ENCODE measurements at regions of chr9 and their contacts with region 1.

Region 1: DNA sequence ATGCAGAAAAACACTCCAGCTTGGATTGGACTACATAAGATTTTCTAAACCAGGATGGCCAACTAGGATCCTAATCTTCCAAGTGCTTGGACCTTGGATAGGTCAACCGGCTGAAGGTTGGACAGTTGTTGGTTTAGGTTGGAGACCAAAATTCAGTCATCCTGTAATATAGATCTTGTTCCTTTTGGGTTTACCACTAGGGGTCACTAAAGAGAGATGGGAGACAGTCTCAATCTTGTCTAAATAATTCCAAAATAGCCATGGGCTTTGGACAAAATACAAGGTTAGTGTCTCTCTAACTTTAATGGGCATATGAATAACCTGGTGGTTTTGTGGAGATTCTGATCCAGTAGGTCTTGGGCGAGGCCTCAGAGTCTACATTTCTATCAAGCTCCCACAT is 148.7 kb upstream of the ERCC6L2 start:
- DNase-seq: peak in 1 of 2 donors; percentile 50
- ATAC-seq: no peak
- H3K4me3 ChIP-seq: no peak overlapping the region
- H3K4me3 Mint-ChIP-seq: no peak overlapping the region
- H3K27ac ChIP-seq: no peak overlapping the region
- H3K27ac Mint-ChIP-seq: peak overlapping the region in 1 of 2 donors; percentile 59
- H3K4me1 ChIP-seq: peaks cover 22% of the 10 kb centered on the region
- H3K4me1 Mint-ChIP-seq: peaks cover 47 to 53% of the 10 kb centered on the region in 2 donors
- H3K27me3 ChIP-seq: no peaks in the 10 kb centered on the region
- H3K27me3 Mint-ChIP-seq: peaks cover under 1 to 2% of the 10 kb centered on the region in 2 donors
- CTCF ChIP-seq: peak; percentile 68

Region 2: GRCh38 chr9:95462249-95463147 is 264.3 kb before region 1 on chr9:
- intact Hi-C with region 1: loop called (anchors 1 kb)
- DNase-seq: peak; percentile 55 to 92
- ATAC-seq: peak; percentile 85 to 98 (median 91)
- H3K4me3 ChIP-seq: peak overlapping the region; percentile 15
- H3K4me3 Mint-ChIP-seq: peak overlapping the region; percentile 96
- H3K27ac ChIP-seq: peak overlapping the region; percentile 2
- H3K27ac Mint-ChIP-seq: peak overlapping the region; percentile 84 to 87
- H3K4me1 ChIP-seq: peaks cover 26% of the 10 kb centered on the region
- H3K4me1 Mint-ChIP-seq: peaks cover 52 to 68% of the 10 kb centered on the region in 2 donors
- H3K27me3 ChIP-seq: no peaks in the 10 kb centered on the region
- H3K27me3 Mint-ChIP-seq: no peaks in the 10 kb centered on the region
- CTCF ChIP-seq: no peak

Region 3: GRCh38 chr9:95696701-95697100 is 30.1 kb before region 1 on chr9:
- intact Hi-C with region 1: no loop called
- DNase-seq: no peak
- ATAC-seq: no peak
- H3K4me3 ChIP-seq: no peak overlapping the region
- H3K4me3 Mint-ChIP-seq: no peak overlapping the region
- H3K27ac ChIP-seq: no peak overlapping the region
- H3K27ac Mint-ChIP-seq: no peak overlapping the region
- H3K4me1 ChIP-seq: no peaks in the 10 kb centered on the region
- H3K4me1 Mint-ChIP-seq: no peaks in the 10 kb centered on the region
- H3K27me3 ChIP-seq: peaks cover 4% of the 10 kb centered on the region
- H3K27me3 Mint-ChIP-seq: peaks cover 10 to 26% of the 10 kb centered on the region in 2 donors
- CTCF ChIP-seq: no peak

Region 4: DNA sequence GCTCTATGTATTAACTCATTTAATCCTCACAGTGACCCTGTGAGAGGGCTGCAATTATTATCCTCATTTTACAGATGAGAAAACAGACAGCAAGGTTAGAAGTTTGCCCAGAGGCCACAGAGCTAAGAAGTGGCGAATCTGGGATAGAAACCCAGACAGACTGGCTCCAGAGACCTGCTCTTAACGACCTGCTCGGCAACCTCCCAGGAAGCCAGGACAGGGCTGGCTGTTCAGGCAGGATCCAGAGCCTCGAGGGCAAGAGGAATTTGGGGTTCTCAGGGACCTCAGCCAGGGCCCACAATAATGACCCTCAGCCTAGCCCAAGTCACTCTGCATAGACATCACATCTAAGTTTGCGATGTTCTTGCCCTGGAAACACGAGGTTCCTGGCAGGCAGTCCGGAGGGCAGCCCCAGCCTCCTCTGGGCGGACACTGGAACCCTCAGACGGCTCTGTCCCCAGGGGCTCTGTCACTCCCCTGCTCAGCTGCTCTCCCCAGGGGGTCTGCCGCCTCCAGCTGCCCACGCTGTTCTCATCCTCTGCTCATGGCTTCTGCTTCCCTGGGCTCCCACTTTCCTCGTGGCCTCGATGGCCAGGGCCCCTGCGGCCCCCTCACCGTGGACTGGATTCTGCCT is 10.2 kb after region 1 on chr9:
- intact Hi-C with region 1: no loop called
- DNase-seq: no peak
- ATAC-seq: no peak
- H3K4me3 ChIP-seq: no peak overlapping the region
- H3K4me3 Mint-ChIP-seq: no peak overlapping the region
- H3K27ac ChIP-seq: no peak overlapping the region
- H3K27ac Mint-ChIP-seq: no peak overlapping the region
- H3K4me1 ChIP-seq: peaks cover 6% of the 10 kb centered on the region
- H3K4me1 Mint-ChIP-seq: no peaks in the 10 kb centered on the region
- H3K27me3 ChIP-seq: peaks cover 2% of the 10 kb centered on the region
- H3K27me3 Mint-ChIP-seq: peaks cover 9 to 14% of the 10 kb centered on the region in 2 donors
- CTCF ChIP-seq: no peak

Region 5: GRCh38 chr9:95875305-95876137 is 148.8 kb after region 1 on chr9 and contains the start of gene ERCC6L2:
- intact Hi-C with region 1: loop called (anchors 2 kb)
- DNase-seq: peak; percentile 92 to 97
- ATAC-seq: peak; percentile 85 to 93 (median 89)
- H3K4me3 ChIP-seq: peak within 1 kb of the TSS; percentile 95
- H3K4me3 Mint-ChIP-seq: no peak within 1 kb of the TSS
- H3K27ac ChIP-seq: no peak within 1 kb of the TSS
- H3K27ac Mint-ChIP-seq: no peak within 1 kb of the TSS
- H3K4me1 ChIP-seq: peaks cover 20% of the 10 kb centered on the region
- H3K4me1 Mint-ChIP-seq: peaks cover 9 to 16% of the 10 kb centered on the region in 2 donors
- H3K27me3 ChIP-seq: no peaks in the 10 kb centered on the region
- H3K27me3 Mint-ChIP-seq: no peaks in the 10 kb centered on the region
- CTCF ChIP-seq: no peak
- total RNA-seq, gene ERCC6L2: 37.1 to 45.8 (median 38.6) TPM

Region 6: GRCh38 chr9:96061293-96061987 is 334.7 kb after region 1 on chr9:
- intact Hi-C with region 1: loop called (anchors 1 kb)
- DNase-seq: peak; percentile 33 to 64
- ATAC-seq: peak; percentile 38 to 72 (median 43)
- H3K4me3 ChIP-seq: no peak overlapping the region
- H3K4me3 Mint-ChIP-seq: no peak overlapping the region
- H3K27ac ChIP-seq: no peak overlapping the region
- H3K27ac Mint-ChIP-seq: no peak overlapping the region
- H3K4me1 ChIP-seq: peaks cover 9% of the 10 kb centered on the region
- H3K4me1 Mint-ChIP-seq: peaks cover 22 to 27% of the 10 kb centered on the region in 2 donors
- H3K27me3 ChIP-seq: no peaks in the 10 kb centered on the region
- H3K27me3 Mint-ChIP-seq: peaks cover 6 to 12% of the 10 kb centered on the region in 2 donors
- CTCF ChIP-seq: peak; percentile 54

Region 7: DNA sequence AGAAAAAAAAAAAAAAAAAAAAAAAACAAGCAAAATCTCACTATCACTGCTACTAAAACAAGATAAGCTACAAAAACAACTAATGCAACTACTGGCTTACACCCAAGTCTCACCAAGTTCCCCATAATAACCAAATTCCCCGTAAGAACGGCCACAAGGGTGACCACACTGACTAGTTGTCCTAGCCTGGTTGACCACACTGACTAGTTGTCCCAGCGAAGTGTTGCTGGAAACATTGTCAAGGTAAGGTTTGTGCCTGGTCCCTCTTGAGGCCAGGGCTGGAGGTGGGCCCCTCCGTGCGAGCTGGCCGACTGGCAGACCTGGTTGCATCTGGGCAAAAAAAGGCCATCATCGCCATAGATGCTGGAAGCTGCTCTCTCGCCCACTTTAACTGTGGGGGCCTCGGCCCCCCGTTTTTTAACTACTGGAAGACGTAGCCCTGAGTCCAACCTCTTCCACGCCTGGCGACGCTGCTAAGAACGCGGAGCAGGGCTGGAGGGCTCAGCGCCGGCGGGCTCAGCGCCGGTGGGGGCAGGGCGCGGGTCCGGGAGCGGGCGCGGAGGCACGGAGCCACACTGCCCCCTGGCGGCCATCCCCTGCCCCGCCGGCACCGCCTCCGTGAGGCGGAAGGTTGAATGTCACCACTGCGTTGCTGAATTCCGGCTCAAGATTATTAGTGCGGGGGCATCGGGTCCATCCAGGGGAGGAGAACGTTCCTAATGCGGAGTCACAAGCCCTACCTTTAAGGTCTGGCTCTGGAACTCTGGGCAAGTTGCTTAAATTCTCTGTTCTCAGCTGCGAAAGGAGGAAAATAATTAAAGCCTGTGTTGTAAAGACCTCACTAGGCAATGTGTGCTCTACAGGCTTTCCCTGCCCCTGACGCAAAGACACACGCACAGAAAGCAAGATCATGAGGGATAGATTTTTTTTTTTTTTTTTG is 491.3 kb after region 1 on chr9:
- intact Hi-C with region 1: loop called (anchors 2 kb)
- DNase-seq: peak; percentile 82 to 85
- ATAC-seq: peak; percentile 91 to 92 (median 92)
- H3K4me3 ChIP-seq: no peak overlapping the region
- H3K4me3 Mint-ChIP-seq: peak overlapping the region; percentile 55
- H3K27ac ChIP-seq: no peak overlapping the region
- H3K27ac Mint-ChIP-seq: peak overlapping the region in 1 of 2 donors; percentile 29
- H3K4me1 ChIP-seq: peaks cover 25% of the 10 kb centered on the region
- H3K4me1 Mint-ChIP-seq: peaks cover 4 to 21% of the 10 kb centered on the region in 2 donors
- H3K27me3 ChIP-seq: peaks cover 20% of the 10 kb centered on the region
- H3K27me3 Mint-ChIP-seq: peaks cover 39 to 63% of the 10 kb centered on the region in 2 donors
- CTCF ChIP-seq: peak; percentile 99

Measured in natural killer cell (primary cell).